Activated CD4-positive, alpha-beta T cell treated with anti-CD3 and anti-CD28 coated beads, Interleukin-2, amount 10 ng/mL, durations not matched to agents 24 days and 14 days (primary cell): ENCODE measurements at regions of chr6 and their contacts with region 1.

Region 1: GRCh38 chr6:32700391-32701040 is 34.1 kb upstream of the HLA-DQB1 start:
- DNase-seq: peak; percentile 75
- H3K4me3 Mint-ChIP-seq: no peak overlapping the region
- H3K27ac Mint-ChIP-seq: no peak overlapping the region
- H3K4me1 Mint-ChIP-seq: peaks cover 2% of the 10 kb centered on the region
- H3K27me3 Mint-ChIP-seq: peaks cover 66% of the 10 kb centered on the region

Region 2: DNA sequence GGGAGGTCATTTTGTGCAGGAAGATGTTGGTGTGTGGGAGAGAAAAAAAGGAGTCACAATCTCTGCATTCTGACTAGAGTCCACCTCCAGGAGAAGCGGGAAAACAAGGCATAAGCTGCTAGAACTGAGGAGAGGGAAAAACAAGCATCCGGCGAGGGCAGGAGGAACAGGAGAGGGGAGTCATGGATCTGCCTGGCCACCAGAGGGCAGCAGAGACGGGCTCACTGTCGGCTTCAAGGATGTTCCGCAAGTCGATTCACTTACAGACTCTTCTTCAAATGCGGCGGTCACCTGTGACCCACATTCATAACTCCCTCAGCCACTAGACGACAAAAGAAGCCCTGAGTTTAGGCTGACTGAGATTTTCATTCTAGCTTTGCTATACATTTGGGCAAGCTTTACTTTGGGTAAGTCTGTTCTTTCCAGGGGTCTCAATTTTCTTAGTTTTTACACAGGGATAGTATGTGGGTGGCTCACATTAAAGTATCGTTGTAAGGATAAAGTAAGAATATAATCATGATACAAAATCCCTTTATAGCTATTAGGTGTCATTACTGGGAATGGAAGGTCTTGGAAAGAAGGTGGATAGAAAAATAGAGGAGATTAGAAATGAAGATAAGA is 287.0 kb before region 1 on chr6:
- intact Hi-C with region 1: loop called (anchors 1 kb)
- DNase-seq: peak; percentile 94
- H3K4me3 Mint-ChIP-seq: no peak overlapping the region
- H3K27ac Mint-ChIP-seq: no peak overlapping the region
- H3K4me1 Mint-ChIP-seq: peaks cover 8% of the 10 kb centered on the region
- H3K27me3 Mint-ChIP-seq: peaks cover 52% of the 10 kb centered on the region

Region 3: GRCh38 chr6:32432050-32432450 is 268.5 kb before region 1 on chr6:
- intact Hi-C with region 1: loop called (anchors 1 kb)
- DNase-seq: no peak
- H3K4me3 Mint-ChIP-seq: no peak overlapping the region
- H3K27ac Mint-ChIP-seq: no peak overlapping the region
- H3K4me1 Mint-ChIP-seq: no peaks in the 10 kb centered on the region
- H3K27me3 Mint-ChIP-seq: peaks cover 32% of the 10 kb centered on the region

Region 4: DNA sequence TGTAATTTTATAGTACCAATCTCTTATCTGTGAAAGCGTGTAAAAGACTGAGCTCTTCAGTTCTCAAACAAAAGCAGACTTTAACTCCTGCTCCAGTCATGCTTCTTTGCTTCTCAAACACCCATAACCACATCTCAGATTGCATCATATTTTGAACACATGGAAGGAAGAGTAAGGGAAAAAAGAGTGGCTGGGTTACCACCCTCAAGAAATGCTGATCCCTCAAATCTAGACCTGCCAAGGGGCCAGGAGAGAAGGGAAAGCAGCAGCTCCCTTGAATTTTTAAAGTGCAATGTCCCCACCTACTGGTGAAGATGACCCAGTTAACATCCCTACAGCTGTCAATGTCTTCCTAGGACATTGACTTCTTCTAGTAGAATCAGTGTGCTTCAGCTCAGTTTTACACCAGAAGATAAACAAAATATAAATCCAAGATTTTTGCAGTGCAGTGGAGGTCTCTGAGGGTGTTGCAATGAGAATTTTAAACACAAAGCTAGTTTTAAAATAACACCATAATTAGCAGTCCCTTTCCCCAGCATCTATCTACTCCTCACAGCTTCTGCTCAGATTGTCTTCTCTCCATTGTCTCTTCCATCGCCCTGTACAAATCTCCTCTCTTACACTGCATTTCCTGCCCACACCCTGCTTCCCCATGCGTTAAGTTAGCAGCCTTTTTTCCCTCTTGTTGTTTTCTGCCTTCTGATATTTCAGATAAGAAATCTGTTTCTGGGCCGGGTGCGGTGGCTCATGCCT is 85.4 kb after region 1 on chr6:
- intact Hi-C with region 1: loop called (anchors 5 kb)
- DNase-seq: peak; percentile 81
- H3K4me3 Mint-ChIP-seq: no peak overlapping the region
- H3K27ac Mint-ChIP-seq: no peak overlapping the region
- H3K4me1 Mint-ChIP-seq: no peaks in the 10 kb centered on the region
- H3K27me3 Mint-ChIP-seq: peaks cover 58% of the 10 kb centered on the region